OCI-LY7 (cell line): ENCODE measurements at regions of chr6 and their contacts with region 1.

Region 1: GRCh38 chr6:158894193-158894592 is 75.0 kb upstream of the EZR start:
- DNase-seq: no peak
- H3K4me3 ChIP-seq: no peak overlapping the region
- H3K27ac ChIP-seq: no peak overlapping the region
- H3K4me1 ChIP-seq: no peaks in the 10 kb centered on the region
- CTCF ChIP-seq: no peak

Region 2: DNA sequence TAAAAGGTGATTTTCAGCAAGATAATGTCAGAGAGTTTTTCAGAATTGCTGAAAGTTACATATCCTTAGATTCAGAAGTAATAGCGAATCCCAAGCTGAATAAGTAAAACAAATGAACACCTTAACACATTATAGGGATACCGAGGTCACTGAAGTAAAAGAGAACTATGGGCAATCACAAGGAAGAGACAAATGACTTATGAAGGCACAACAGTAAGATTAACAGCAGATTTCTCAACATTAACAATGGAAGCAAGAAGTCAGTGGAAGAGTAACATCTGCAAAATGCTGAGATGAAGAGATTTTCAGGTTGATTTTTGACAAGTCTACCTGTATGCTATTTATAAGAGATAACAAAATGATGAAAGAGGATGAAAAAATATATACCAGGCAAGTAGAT is 11.1 kb after region 1 on chr6:
- CTCF ChIA-PET with region 1: no interaction called
- POLR2A ChIA-PET with region 1: interaction called, 10 read pairs
- intact Hi-C with region 1: no loop called
- DNase-seq: peak; percentile 54
- H3K4me3 ChIP-seq: no peak overlapping the region
- H3K27ac ChIP-seq: no peak overlapping the region
- H3K4me1 ChIP-seq: peaks cover 13% of the 10 kb centered on the region
- CTCF ChIP-seq: no peak

Region 3: DNA sequence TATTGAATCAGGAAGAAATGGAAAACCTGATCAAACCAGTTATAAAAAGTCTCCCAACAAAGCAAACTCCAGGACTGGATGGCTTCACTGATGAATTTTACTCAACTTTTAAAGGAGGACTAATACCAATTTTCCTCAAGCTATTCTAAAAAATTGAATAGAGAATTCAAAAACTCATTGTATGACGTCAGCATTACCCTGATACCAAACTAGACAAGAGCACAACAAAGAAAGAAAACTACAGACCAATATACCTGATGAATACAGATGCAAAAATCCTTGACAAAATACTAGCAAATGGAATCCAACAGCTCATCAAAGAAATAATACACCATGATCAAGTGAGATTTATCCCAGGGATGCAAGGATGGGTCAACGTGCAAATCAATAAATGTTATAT is 448.0 kb after region 1 on chr6:
- CTCF ChIA-PET with region 1: no interaction called
- POLR2A ChIA-PET with region 1: no interaction called
- intact Hi-C with region 1: no loop called
- DNase-seq: no peak
- H3K4me3 ChIP-seq: no peak overlapping the region
- H3K27ac ChIP-seq: no peak overlapping the region
- H3K4me1 ChIP-seq: no peaks in the 10 kb centered on the region
- CTCF ChIP-seq: no peak